ENCODE measurements at regions of chr20 and their contacts with region 1.

Region 1: GRCh38 chr20:50731055-50731871 is at the start of gene PARD6B:
- DNase-seq: peak; percentile 99 to 100 (median 100)
- H3K4me3 ChIP-seq: peak within 1 kb of the TSS; percentile 66
- H3K4me3 Mint-ChIP-seq: peak within 1 kb of the TSS; percentile 89 to 98 (median 91)
- H3K27ac ChIP-seq: peak within 1 kb of the TSS; percentile 61
- H3K27ac Mint-ChIP-seq: peak within 1 kb of the TSS; percentile 78 to 94 (median 88)
- H3K4me1 ChIP-seq: peaks cover 23% of the 10 kb centered on the region
- H3K4me1 Mint-ChIP-seq: peaks cover 20 to 42% (median 40%) of the 10 kb centered on the region in 3 donors
- H3K27me3 ChIP-seq: no peaks in the 10 kb centered on the region
- H3K27me3 Mint-ChIP-seq: peaks cover 3 to 5% of the 10 kb centered on the region in 2 donors
- total RNA-seq, gene PARD6B: 5.5 to 5.6 TPM

Region 2: GRCh38 chr20:50750145-50750671 is 18.9 kb after region 1 on chr20:
- CTCF ChIA-PET with region 1: interaction called, 13 read pairs
- POLR2A ChIA-PET with region 1: no interaction called
- DNase-seq: no peak
- H3K4me3 ChIP-seq: no peak overlapping the region
- H3K4me3 Mint-ChIP-seq: no peak overlapping the region
- H3K27ac ChIP-seq: no peak overlapping the region
- H3K27ac Mint-ChIP-seq: no peak overlapping the region
- H3K4me1 ChIP-seq: no peaks in the 10 kb centered on the region
- H3K4me1 Mint-ChIP-seq: peaks cover 11 to 13% (median 13%) of the 10 kb centered on the region in 3 donors
- H3K27me3 ChIP-seq: no peaks in the 10 kb centered on the region
- H3K27me3 Mint-ChIP-seq: no peaks in the 10 kb centered on the region